IMR-90 (cell line): ENCODE measurements at regions of chr5 and their contacts with region 1.

Region 1: DNA sequence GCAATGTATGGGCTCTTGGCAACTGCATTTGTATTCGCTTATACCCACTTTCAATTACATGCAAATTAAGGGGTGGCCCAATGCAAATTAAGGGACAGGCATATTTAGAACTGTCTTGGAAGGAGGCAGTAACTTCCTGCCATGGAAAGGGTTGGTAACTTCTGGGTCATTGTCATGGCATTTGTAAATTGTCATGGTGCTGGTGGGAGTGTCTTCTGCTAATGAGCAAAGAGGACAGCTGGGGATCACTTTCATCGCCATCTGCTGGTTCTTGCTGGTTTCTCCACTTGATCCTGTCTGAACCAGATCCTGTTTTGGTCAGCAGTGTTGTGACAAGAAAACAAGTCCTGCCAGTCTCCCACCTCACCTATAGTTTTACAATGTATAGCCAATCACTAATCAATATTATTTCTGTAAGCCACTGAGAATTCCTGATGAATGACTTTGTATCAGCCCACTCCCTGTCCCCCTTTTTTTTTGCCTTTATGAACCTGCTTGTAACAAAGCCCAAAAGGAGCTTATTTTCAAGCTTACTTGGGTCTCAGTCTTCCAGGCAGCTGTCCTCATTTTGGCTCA is 23.4 kb upstream of the UGT3A2 start:
- DNase-seq: peak; percentile 17
- ATAC-seq: peak; percentile 72
- H3K4me3 ChIP-seq: no peak overlapping the region
- H3K27ac ChIP-seq: no peak overlapping the region
- H3K4me1 ChIP-seq: no peaks in the 10 kb centered on the region
- H3K27me3 ChIP-seq: no peaks in the 10 kb centered on the region; the same call in 1 of the 2 replicates
- CTCF ChIP-seq: peak; percentile 21; the same call in 1 of the 2 replicates
- POLR2A ChIP-seq: no peak
- RAD21 ChIP-seq: no peak

Region 2: GRCh38 chr5:36079200-36079761 is 10.8 kb before region 1 on chr5:
- CTCF ChIA-PET with region 1: interaction called, 17 read pairs
- POLR2A ChIA-PET with region 1: no interaction called
- dilution Hi-C with region 1: no loop called
- in situ Hi-C with region 1: no loop called
- intact Hi-C with region 1: no loop called
- DNase-seq: peak; percentile 44
- ATAC-seq: peak; percentile 97
- H3K4me3 ChIP-seq: no peak overlapping the region
- H3K27ac ChIP-seq: no peak overlapping the region
- H3K4me1 ChIP-seq: no peaks in the 10 kb centered on the region
- H3K27me3 ChIP-seq: peaks cover 5% of the 10 kb centered on the region
- CTCF ChIP-seq: peak; percentile 60
- POLR2A ChIP-seq: no peak
- RAD21 ChIP-seq: peak; percentile 61

Region 3: GRCh38 chr5:36214434-36214833 is 124.4 kb after region 1 on chr5:
- CTCF ChIA-PET with region 1: no interaction called
- POLR2A ChIA-PET with region 1: no interaction called
- dilution Hi-C with region 1: no loop called
- in situ Hi-C with region 1: no loop called
- intact Hi-C with region 1: no loop called
- DNase-seq: no peak
- ATAC-seq: no peak
- H3K4me3 ChIP-seq: no peak overlapping the region
- H3K27ac ChIP-seq: no peak overlapping the region
- H3K4me1 ChIP-seq: no peaks in the 10 kb centered on the region
- H3K27me3 ChIP-seq: no peaks in the 10 kb centered on the region
- CTCF ChIP-seq: peak; percentile 30
- POLR2A ChIP-seq: no peak
- RAD21 ChIP-seq: peak; percentile 28; the same call in 1 of the 2 replicates